B cell (primary cell): ENCODE measurements at regions of chr13 and their contacts with region 1.

Region 1: DNA sequence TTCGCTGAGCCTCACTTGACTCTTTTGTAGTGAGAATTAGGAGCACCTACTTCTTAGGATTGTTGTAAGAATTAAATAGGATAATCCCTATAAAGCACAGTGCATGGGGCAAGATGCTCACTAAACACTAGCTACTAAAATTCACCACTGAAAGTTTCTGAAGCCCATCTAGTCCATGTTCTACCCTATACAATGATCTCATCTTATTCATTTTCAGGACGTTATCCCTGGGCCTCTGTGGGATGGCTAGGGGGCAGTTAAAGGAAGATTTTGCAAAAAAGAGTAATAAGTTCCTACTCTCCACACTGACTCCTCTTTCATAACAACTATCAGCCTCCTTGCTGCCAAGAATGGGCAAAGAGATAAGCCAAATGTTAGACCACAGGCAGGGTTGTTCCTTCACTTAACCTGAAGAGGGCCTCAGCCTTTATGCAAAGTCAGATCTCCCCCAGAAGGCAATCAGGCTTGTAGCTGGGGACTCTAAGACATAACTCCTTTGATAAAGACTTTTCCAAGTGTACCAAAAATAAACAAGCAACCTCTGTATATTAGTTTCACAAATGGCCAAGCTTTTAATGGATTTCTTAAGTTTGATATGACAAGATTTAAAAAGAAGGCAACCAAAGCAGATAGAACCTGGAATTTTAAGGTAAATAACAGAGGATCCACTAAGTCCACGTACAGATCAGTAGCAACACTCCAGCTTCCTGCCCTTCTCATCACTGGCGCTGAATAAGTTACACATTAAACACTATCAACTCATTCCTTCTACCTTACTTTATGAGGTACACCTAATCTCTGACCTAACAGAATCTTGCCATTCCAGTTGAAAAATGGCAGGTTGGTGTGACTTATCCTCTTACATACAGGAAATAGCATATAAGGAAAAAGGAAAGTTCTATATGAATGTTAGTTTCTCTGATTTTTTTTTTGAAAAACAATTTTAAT is 44.4 kb downstream of the ELF1 start:
- DNase-seq: peak; percentile 71
- ATAC-seq: peak; percentile 87
- H3K4me3 ChIP-seq: peak overlapping the region in 1 of 5 experiments; percentile 30
- H3K4me3 Mint-ChIP-seq: peak overlapping the region; percentile 51
- H3K27ac ChIP-seq: peak overlapping the region in 1 of 2 donors; percentile 54
- H3K27ac Mint-ChIP-seq: peak overlapping the region; percentile 57
- H3K4me1 ChIP-seq: peaks cover 70 to 92% of the 10 kb centered on the region in 2 donors
- H3K4me1 Mint-ChIP-seq: peaks cover 90% of the 10 kb centered on the region
- H3K27me3 ChIP-seq: no peaks in the 10 kb centered on the region
- H3K27me3 Mint-ChIP-seq: no peaks in the 10 kb centered on the region
- CTCF ChIP-seq: peak; percentile 72

Region 2: DNA sequence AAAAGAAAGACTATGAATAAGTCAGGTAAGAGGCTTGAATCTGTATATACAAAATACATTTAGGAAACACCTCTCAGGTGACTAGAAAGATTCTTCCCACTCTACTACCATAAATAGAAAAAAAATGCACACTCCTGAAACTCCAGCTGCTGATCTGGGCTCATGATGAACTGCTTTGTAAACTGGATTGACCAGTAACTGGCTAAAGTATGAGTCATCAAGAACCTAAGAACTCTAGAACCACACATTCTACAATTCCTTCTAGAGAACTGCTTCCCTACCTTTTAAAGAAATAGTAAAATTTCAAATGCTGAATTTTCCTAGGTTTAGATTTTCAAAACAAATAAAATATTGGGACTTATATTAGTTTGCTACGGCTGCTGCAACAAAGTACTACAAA is 10.8 kb before region 1 on chr13:
- CTCF ChIA-PET with region 1: interaction called, 16 read pairs
- POLR2A ChIA-PET with region 1: interaction called, 3 read pairs
- intact Hi-C with region 1: loop called (anchors 1 kb)
- DNase-seq: no peak
- ATAC-seq: no peak
- H3K4me3 ChIP-seq: no peak overlapping the region
- H3K4me3 Mint-ChIP-seq: peak overlapping the region; percentile 12
- H3K27ac ChIP-seq: peak overlapping the region in 1 of 2 donors; percentile 54
- H3K27ac Mint-ChIP-seq: peak overlapping the region; percentile 46
- H3K4me1 ChIP-seq: peaks cover 72 to 86% of the 10 kb centered on the region in 2 donors
- H3K4me1 Mint-ChIP-seq: peaks cover 83% of the 10 kb centered on the region
- H3K27me3 ChIP-seq: no peaks in the 10 kb centered on the region
- H3K27me3 Mint-ChIP-seq: no peaks in the 10 kb centered on the region
- CTCF ChIP-seq: no peak

Region 3: DNA sequence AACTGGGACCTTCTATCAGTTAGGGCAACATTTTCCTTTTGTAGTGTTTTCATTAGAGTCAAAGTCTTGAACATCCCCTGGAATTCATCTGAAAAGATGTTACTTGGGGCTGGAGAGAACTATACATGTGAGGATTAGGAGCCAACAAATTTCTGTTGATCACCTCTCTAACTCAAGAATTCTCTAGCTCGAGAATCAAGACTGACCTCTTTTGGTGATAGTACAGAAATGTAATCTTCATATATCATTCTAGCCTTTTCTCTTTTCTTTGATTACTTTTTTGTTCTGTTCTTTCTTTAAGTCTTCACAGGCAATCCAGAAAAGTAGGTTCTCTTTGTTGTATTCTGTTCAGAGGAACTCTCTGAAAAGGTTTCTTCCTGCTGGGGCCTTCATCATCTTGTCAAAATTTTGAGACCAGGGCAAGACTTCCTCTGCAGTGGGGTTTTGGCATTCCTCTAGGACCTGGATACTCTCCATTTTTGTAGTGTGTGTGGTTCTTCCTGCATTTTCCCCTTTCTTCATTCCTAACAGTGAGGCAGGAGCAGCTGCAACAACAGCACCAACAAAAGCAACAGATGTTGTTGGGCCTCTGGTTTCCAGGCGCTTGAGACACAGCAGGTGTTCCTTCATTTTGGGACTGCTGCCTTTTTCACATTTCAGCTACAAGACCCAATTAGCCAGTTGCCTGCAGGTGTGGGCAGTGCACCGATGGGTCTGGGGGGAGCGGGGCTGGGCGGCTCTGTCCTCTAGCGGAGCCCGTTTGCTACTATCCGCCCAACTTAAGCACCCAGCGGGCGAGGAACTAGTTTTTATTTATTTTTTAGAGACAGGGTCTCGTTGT is 18.2 kb after region 1 on chr13:
- CTCF ChIA-PET with region 1: interaction called, 10 read pairs
- POLR2A ChIA-PET with region 1: no interaction called
- intact Hi-C with region 1: loop called (anchors 2 kb)
- DNase-seq: peak; percentile 43
- ATAC-seq: no peak
- H3K4me3 ChIP-seq: no peak overlapping the region
- H3K4me3 Mint-ChIP-seq: peak overlapping the region; percentile 43
- H3K27ac ChIP-seq: peak overlapping the region; percentile 36 to 70
- H3K27ac Mint-ChIP-seq: peak overlapping the region; percentile 78
- H3K4me1 ChIP-seq: peaks cover 60 to 83% of the 10 kb centered on the region in 2 donors
- H3K4me1 Mint-ChIP-seq: peaks cover 75% of the 10 kb centered on the region
- H3K27me3 ChIP-seq: no peaks in the 10 kb centered on the region
- H3K27me3 Mint-ChIP-seq: no peaks in the 10 kb centered on the region
- CTCF ChIP-seq: peak; percentile 16

Region 4: GRCh38 chr13:41004875-41005693 is 30.4 kb after region 1 on chr13:
- CTCF ChIA-PET with region 1: interaction called, 10 read pairs
- POLR2A ChIA-PET with region 1: no interaction called
- intact Hi-C with region 1: no loop called
- DNase-seq: peak; percentile 68
- ATAC-seq: peak; percentile 78
- H3K4me3 ChIP-seq: peak overlapping the region in 3 of 5 experiments; percentile 10 to 31 (median 11)
- H3K4me3 Mint-ChIP-seq: peak overlapping the region; percentile 57
- H3K27ac ChIP-seq: peak overlapping the region; percentile 61 to 79
- H3K27ac Mint-ChIP-seq: peak overlapping the region; percentile 70
- H3K4me1 ChIP-seq: peaks cover 68 to 82% of the 10 kb centered on the region in 2 donors
- H3K4me1 Mint-ChIP-seq: peaks cover 69% of the 10 kb centered on the region
- H3K27me3 ChIP-seq: no peaks in the 10 kb centered on the region
- H3K27me3 Mint-ChIP-seq: no peaks in the 10 kb centered on the region
- CTCF ChIP-seq: no peak

Region 5: GRCh38 chr13:41019011-41019487 is 44.3 kb after region 1 on chr13 and contains the start of gene ELF1:
- CTCF ChIA-PET with region 1: interaction called, 15 read pairs
- POLR2A ChIA-PET with region 1: no interaction called
- intact Hi-C with region 1: loop called (anchors 2 kb)
- DNase-seq: peak; percentile 91
- ATAC-seq: peak; percentile 89
- H3K4me3 ChIP-seq: peak within 1 kb of the TSS; percentile 65 to 99 (median 75)
- H3K4me3 Mint-ChIP-seq: peak within 1 kb of the TSS; percentile 94
- H3K27ac ChIP-seq: peak within 1 kb of the TSS; percentile 96 to 100
- H3K27ac Mint-ChIP-seq: peak within 1 kb of the TSS; percentile 98
- H3K4me1 ChIP-seq: peaks cover 29 to 33% of the 10 kb centered on the region in 2 donors
- H3K4me1 Mint-ChIP-seq: peaks cover 52% of the 10 kb centered on the region
- H3K27me3 ChIP-seq: no peaks in the 10 kb centered on the region
- H3K27me3 Mint-ChIP-seq: no peaks in the 10 kb centered on the region
- CTCF ChIP-seq: no peak
- total RNA-seq, gene ELF1: 185 and 186 TPM in 2 replicates